ENCODE measurements at regions of chr5 and their contacts with region 1.

Region 1: DNA sequence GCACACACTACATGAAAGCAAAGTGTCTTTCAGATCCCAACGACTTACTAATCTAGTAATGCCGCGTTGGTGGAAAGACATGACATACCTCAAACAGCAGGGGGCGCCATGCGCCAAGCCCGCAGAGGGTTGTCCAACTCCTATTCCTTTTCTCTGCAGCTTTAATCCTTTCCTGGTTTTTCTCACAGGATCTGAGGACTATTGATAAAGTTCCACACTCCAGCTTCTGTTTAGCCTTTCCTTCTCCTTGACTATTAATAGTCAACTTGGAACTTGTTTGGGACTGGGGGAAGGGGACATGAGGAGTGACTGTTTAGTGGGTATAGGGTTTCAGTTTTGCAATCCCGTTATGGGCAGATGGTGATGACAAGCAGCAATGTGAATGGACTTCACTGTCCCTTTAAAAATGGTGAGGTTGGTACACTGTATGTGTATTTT is 62.9 kb downstream of the OTULIN start:
- DNase-seq: peak; percentile 64
- H3K4me3 Mint-ChIP-seq: no peak overlapping the region
- H3K27ac Mint-ChIP-seq: no peak overlapping the region
- H3K4me1 Mint-ChIP-seq: peaks cover 11% of the 10 kb centered on the region
- H3K27me3 Mint-ChIP-seq: no peaks in the 10 kb centered on the region

Region 2: GRCh38 chr5:14674983-14675854 is 52.2 kb before region 1 on chr5:
- intact Hi-C with region 1: no loop called
- DNase-seq: no peak
- H3K4me3 Mint-ChIP-seq: peak overlapping the region; percentile 46
- H3K27ac Mint-ChIP-seq: peak overlapping the region; percentile 82
- H3K4me1 Mint-ChIP-seq: peaks cover 73% of the 10 kb centered on the region
- H3K27me3 Mint-ChIP-seq: no peaks in the 10 kb centered on the region

Region 3: DNA sequence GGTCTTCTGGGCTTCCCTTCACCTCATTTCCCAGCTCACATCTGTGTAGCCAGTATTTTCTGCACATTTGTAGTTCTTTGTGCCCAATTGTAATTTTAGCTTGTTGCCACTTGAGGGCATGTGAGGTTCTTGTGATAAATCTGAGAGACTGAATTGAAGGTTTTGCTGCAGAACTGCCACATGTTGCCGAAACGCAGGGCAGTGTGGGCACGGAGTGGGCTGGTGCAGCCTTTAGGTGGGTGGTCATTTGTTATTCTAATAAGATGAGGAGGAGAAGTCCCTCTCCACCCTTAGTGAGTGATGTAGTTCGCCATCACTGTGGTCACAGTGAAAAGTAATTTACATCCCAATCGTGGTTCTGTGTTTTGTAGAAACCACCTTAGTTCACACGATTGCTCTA is 41.7 kb before region 1 on chr5:
- intact Hi-C with region 1: loop called (anchors 1 kb)
- DNase-seq: no peak
- H3K4me3 Mint-ChIP-seq: no peak overlapping the region
- H3K27ac Mint-ChIP-seq: peak overlapping the region; percentile 93
- H3K4me1 Mint-ChIP-seq: peaks cover 38% of the 10 kb centered on the region
- H3K27me3 Mint-ChIP-seq: no peaks in the 10 kb centered on the region

Region 4: GRCh38 chr5:14739538-14739937 is 12.1 kb after region 1 on chr5:
- intact Hi-C with region 1: no loop called
- DNase-seq: no peak
- H3K4me3 Mint-ChIP-seq: no peak overlapping the region
- H3K27ac Mint-ChIP-seq: no peak overlapping the region
- H3K4me1 Mint-ChIP-seq: peaks cover 11% of the 10 kb centered on the region
- H3K27me3 Mint-ChIP-seq: no peaks in the 10 kb centered on the region

Region 5: GRCh38 chr5:14781106-14781505 is 53.7 kb after region 1 on chr5:
- intact Hi-C with region 1: no loop called
- DNase-seq: no peak
- H3K4me3 Mint-ChIP-seq: no peak overlapping the region
- H3K27ac Mint-ChIP-seq: no peak overlapping the region
- H3K4me1 Mint-ChIP-seq: peaks cover 30% of the 10 kb centered on the region
- H3K27me3 Mint-ChIP-seq: no peaks in the 10 kb centered on the region

Region 6: DNA sequence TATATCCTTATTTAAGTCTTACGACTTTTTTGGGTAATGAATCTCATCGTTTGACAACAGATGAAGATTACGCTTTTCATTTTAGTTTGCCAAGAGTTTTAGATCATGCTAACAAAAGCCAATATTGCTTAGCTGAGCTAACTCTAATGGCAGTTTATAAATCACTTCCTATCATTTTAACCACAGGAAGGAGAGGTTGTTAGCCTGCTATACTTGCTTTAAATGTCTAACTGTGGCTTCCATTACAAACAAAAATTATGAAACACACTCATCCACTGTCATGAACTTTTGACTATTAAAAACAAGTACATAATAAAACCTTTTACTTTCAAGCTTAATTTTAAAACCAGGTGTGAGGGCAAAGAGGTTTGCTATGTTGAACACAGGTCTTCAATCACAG is 197.9 kb after region 1 on chr5:
- intact Hi-C with region 1: loop called (anchors 2 kb)
- DNase-seq: no peak
- H3K4me3 Mint-ChIP-seq: peak overlapping the region; percentile 15
- H3K27ac Mint-ChIP-seq: peak overlapping the region; percentile 78
- H3K4me1 Mint-ChIP-seq: peaks cover 58% of the 10 kb centered on the region
- H3K27me3 Mint-ChIP-seq: peaks cover 2% of the 10 kb centered on the region

Region 7: DNA sequence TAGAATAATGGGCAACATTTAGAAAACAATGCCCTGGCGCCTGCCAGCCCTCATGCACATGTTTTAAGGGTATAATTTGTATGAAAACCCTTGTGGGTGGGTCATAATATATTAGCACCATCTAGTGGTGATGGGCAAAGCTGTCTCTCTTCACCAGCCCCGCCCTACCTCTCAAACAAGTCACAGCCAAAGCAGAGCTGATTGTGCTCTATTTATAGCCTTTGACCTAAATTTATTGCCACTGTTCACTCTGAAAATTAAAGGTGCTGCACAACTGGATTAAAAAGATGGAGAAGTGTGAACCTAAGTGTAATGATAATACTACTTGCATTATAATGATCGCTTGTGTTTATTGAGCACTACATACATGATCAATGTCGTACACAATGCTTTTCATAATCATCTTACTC is 276.1 kb after region 1 on chr5:
- intact Hi-C with region 1: loop called (anchors 1 kb)
- DNase-seq: peak; percentile 33
- H3K4me3 Mint-ChIP-seq: no peak overlapping the region
- H3K27ac Mint-ChIP-seq: no peak overlapping the region
- H3K4me1 Mint-ChIP-seq: peaks cover 20% of the 10 kb centered on the region
- H3K27me3 Mint-ChIP-seq: peaks cover 28% of the 10 kb centered on the region